Activated CD4-positive, alpha-beta memory T cell treated with anti-CD3 and anti-CD28 coated beads, Interleukin-2, amount 10 ng/mL, durations not matched to agents 7 days and 5 days (primary cell): ENCODE measurements at regions of chr5 and their contacts with region 1.

Region 1: DNA sequence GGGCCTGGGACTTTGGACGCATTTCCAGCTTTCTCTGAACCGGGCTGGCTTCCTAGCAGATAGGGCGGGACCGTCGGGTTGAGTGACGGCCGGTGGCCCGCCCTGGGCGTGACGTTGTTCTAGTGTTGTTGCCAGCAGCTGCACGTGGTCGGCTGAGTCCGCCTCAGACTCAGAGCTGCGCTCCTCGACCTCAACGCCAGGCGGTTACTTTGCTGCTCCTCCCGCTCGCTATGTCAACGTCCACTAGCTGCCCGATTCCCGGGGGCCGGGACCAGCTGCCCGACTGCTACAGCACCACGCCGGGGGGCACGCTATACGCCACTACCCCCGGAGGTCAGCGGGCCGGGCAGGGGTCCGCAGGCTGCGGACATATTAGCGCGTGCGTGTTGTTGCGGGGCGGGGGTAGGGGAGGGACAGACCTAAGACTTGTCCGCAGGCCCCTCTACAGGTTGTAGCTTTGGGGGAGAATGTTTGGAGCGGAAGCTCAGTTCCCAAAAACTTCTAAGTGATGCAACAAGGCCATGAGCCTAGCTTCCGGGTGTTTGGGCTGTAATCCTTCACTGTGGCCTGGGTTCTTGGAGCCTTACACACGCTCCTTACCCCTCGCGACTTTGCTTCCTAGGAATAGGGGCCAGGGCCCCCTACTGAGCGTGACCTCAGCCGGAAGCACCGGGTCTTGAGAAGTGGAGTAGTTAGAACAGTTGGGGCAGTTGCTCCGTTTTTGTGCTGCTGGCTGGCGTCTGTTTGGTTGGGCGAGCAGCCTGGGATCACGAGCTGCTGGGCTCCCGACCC is at the start of gene EIF4EBP3:
- DNase-seq: peak; percentile 89
- H3K4me3 Mint-ChIP-seq: peak within 1 kb of the TSS; percentile 66
- H3K27ac Mint-ChIP-seq: peak within 1 kb of the TSS; percentile 83
- H3K4me1 Mint-ChIP-seq: peaks cover 56% of the 10 kb centered on the region
- H3K27me3 Mint-ChIP-seq: no peaks in the 10 kb centered on the region
- total RNA-seq, gene EIF4EBP3: 8.0 to 11.6 TPM

Region 2: GRCh38 chr5:140509898-140510297 is 37.8 kb before region 1 on chr5:
- CTCF ChIA-PET with region 1: no interaction called
- POLR2A ChIA-PET with region 1: no interaction called
- DNase-seq: no peak
- H3K4me3 Mint-ChIP-seq: no peak overlapping the region
- H3K27ac Mint-ChIP-seq: no peak overlapping the region
- H3K4me1 Mint-ChIP-seq: no peaks in the 10 kb centered on the region
- H3K27me3 Mint-ChIP-seq: no peaks in the 10 kb centered on the region

Region 3: DNA sequence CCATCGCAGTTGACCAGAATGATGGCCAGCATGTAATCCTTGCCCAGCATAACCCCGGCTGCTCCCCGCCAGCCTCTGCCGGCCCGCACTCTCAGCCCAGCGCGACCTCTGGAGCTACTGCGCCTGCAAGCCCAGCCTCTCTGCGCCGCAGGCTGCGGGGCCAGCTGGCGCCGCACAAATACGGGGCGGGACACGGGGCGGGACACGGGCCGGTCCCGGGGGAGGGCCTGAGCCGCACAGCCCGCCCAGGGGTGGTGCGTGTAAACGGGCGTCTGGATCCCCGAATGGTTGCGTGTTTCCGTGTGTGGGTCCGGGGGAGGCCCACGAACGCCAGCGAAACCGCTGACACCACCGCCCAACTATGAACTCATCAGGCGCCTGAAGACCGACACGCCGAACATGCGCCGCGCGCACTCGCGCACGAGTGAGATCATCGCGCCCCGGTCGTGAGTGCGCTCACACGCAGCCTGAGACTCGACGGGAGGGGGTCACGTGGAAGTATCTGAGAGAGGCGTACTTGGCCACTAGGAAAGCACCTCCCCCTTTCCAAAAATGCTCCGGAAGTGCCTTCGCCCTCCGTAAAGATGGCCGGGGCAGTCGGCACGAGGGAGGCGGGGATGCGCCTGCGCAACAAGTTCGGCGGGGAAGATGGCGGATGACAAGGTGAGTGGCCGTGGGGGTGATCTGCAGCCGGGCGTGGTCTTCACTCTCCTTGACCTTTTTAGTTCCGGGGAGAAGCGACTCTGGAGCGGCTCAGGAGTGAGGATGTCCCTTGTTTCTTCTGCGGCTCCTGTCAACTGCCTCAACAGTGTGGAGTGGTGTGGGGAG is 16.7 kb after region 1 on chr5 and contains the starts of genes APBB3 and SLC35A4:
- CTCF ChIA-PET with region 1: interaction called, 7 read pairs
- POLR2A ChIA-PET with region 1: interaction called, 101 read pairs
- DNase-seq: peak; percentile 98
- H3K4me3 Mint-ChIP-seq: peak within 1 kb of the TSS; percentile 93
- H3K27ac Mint-ChIP-seq: peak within 1 kb of the TSS; percentile 89
- H3K4me1 Mint-ChIP-seq: peaks cover 67% of the 10 kb centered on the region
- H3K27me3 Mint-ChIP-seq: no peaks in the 10 kb centered on the region
- total RNA-seq, gene APBB3: 23.7 to 27.5 TPM
- total RNA-seq, gene SLC35A4: 78.9 to 82.1 TPM

Region 4: GRCh38 chr5:140632150-140633020 is 84.7 kb after region 1 on chr5:
- CTCF ChIA-PET with region 1: interaction called, 17 read pairs
- POLR2A ChIA-PET with region 1: interaction called, 12 read pairs
- DNase-seq: peak; percentile 52
- H3K4me3 Mint-ChIP-seq: peak overlapping the region; percentile 77
- H3K27ac Mint-ChIP-seq: no peak overlapping the region
- H3K4me1 Mint-ChIP-seq: peaks cover 36% of the 10 kb centered on the region
- H3K27me3 Mint-ChIP-seq: peaks cover 29% of the 10 kb centered on the region

Region 5: DNA sequence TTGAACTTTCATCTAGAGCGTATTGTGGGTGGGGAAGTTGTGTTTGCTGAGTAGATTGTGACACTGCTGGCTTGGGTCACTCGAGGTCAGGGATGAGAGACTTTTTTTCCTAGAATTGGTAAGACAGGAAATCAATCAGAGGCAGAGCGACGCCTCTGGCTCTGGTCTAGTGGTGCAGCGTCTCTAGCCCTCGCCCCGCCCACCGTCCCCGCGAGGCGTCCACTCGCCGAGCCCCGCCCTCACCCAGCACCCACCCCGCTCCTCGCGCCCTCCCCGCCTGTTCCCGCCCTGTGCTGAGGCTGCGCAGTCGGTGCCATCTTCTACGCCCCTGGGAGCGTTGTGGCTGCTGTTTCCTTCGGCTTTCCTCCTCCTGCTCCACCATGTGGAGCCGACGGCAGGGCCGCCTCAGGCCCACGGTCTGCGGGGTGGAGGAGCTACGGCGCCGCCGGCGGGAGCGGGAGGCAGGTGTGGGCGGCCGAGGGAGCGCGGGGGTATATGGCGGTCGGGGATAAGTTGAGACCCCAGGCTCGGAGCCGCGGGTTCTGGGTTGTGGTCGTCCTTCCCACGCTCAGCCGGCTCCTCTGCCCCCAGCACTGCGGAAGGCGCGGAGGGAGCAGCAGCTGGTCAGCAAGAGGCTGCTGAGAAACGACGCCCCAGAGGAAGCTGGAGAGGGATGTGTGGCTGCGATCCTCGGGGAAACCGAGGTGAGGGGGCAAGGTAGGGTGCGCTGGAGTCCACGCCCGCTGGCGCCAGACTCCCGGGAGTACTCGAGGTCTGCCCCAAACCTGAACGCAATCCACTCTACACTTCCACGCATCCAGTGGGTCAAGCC is 91.7 kb after region 1 on chr5 and contains the start of gene TMCO6:
- CTCF ChIA-PET with region 1: interaction called, 18 read pairs
- POLR2A ChIA-PET with region 1: interaction called, 12 read pairs
- DNase-seq: peak; percentile 97
- H3K4me3 Mint-ChIP-seq: peak within 1 kb of the TSS; percentile 97
- H3K27ac Mint-ChIP-seq: peak within 1 kb of the TSS; percentile 89
- H3K4me1 Mint-ChIP-seq: peaks cover 48% of the 10 kb centered on the region
- H3K27me3 Mint-ChIP-seq: no peaks in the 10 kb centered on the region
- total RNA-seq, gene TMCO6: 28.9 to 29.0 TPM

Region 6: GRCh38 chr5:140690941-140691924 is 143.5 kb after region 1 on chr5 and contains the starts of genes HARS1 and HARS2:
- CTCF ChIA-PET with region 1: no interaction called
- POLR2A ChIA-PET with region 1: interaction called, 14 read pairs
- DNase-seq: peak; percentile 85
- H3K4me3 Mint-ChIP-seq: peak within 1 kb of the TSS; percentile 98
- H3K27ac Mint-ChIP-seq: peak within 1 kb of the TSS; percentile 89
- H3K4me1 Mint-ChIP-seq: peaks cover 44% of the 10 kb centered on the region
- H3K27me3 Mint-ChIP-seq: no peaks in the 10 kb centered on the region
- total RNA-seq, gene HARS1: 66.0 to 70.2 TPM
- total RNA-seq, gene HARS2: 30.6 to 34.7 TPM